Endothelial cell of umbilical vein (primary cell): ENCODE measurements at regions of chr1 and their contacts with region 1.

Region 1: DNA sequence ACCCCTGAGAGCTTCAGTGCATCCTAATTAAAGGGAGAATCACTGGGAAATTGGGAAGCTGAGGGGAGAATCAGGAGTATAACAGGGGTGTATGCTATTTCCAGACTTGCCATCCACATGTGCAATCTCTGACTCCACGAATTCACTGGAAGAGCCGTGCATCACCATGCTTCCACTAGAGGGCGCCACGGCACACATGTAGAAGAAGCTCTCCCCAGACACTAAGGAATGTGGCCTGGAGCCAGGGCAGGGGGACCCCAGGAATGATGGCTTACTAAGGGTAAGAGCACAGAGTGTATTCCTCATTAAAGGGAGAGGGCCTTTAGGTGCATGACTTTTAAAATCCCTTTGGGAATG is 81.5 kb downstream of the ABCA4 start:
- DNase-seq: peak; percentile 88
- H3K4me3 ChIP-seq: no peak overlapping the region
- H3K27ac ChIP-seq: peak overlapping the region; percentile 98
- H3K4me1 ChIP-seq: peaks cover 43% of the 10 kb centered on the region
- H3K27me3 ChIP-seq: no peaks in the 10 kb centered on the region
- CTCF ChIP-seq: peak; percentile 86 to 97
- POLR2A ChIP-seq: no peak

Region 2: GRCh38 chr1:94025383-94026340 is 13.8 kb before region 1 on chr1:
- CTCF ChIA-PET with region 1: interaction called, 297 read pairs
- POLR2A ChIA-PET with region 1: interaction called, 3 read pairs
- dilution Hi-C with region 1: no loop called
- intact Hi-C with region 1: loop called (anchors 1 kb)
- DNase-seq: peak; percentile 83
- H3K4me3 ChIP-seq: no peak overlapping the region
- H3K27ac ChIP-seq: no peak overlapping the region
- H3K4me1 ChIP-seq: peaks cover 25% of the 10 kb centered on the region
- H3K27me3 ChIP-seq: no peaks in the 10 kb centered on the region
- CTCF ChIP-seq: peak; percentile 53 to 73
- POLR2A ChIP-seq: no peak

Region 3: DNA sequence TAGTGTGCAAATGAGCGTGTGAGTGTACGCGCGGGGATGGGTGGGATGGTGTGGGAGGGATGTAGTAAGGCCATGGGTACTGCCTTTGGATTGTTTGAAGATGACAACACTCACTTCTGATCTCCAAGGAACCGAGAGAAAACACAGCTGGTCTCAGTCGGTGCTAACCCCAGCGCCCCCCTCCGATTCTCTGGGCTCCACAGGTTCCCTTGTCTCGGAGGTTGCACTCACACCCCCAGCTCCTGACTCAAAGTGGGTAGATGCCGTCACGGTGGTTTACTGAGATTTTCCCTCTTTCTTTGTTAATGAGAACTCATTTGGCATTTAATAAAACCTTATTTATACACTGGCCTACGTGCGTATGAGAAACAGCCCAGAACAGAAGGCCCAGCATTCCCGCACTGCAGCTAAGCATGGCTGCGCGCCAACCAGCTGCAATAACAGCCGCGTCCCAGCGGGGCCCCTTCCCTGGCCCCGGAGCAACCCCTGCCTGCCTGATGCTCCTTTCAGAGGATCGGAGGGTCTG is 55.7 kb after region 1 on chr1:
- CTCF ChIA-PET with region 1: interaction called, 8 read pairs
- POLR2A ChIA-PET with region 1: interaction called, 5 read pairs
- dilution Hi-C with region 1: no loop called
- intact Hi-C with region 1: loop called (anchors 1 kb)
- DNase-seq: peak; percentile 97
- H3K4me3 ChIP-seq: no peak overlapping the region
- H3K27ac ChIP-seq: peak overlapping the region; percentile 91
- H3K4me1 ChIP-seq: peaks cover 56% of the 10 kb centered on the region
- H3K27me3 ChIP-seq: no peaks in the 10 kb centered on the region
- CTCF ChIP-seq: no peak
- POLR2A ChIP-seq: peak; percentile 5

Region 4: GRCh38 chr1:94237291-94238226 is 198.1 kb after region 1 on chr1 and contains the start of gene ARHGAP29:
- CTCF ChIA-PET with region 1: interaction called, 29 read pairs
- POLR2A ChIA-PET with region 1: interaction called, 20 read pairs
- dilution Hi-C with region 1: no loop called
- intact Hi-C with region 1: no loop called
- DNase-seq: peak; percentile 86
- H3K4me3 ChIP-seq: peak within 1 kb of the TSS; percentile 88 to 100 (median 95)
- H3K27ac ChIP-seq: peak within 1 kb of the TSS; percentile 93
- H3K4me1 ChIP-seq: peaks cover 67% of the 10 kb centered on the region
- H3K27me3 ChIP-seq: no peaks in the 10 kb centered on the region
- CTCF ChIP-seq: no peak
- POLR2A ChIP-seq: peak; percentile 83
- total RNA-seq, gene ARHGAP29: 199 and 215 TPM in 2 replicates

Region 5: DNA sequence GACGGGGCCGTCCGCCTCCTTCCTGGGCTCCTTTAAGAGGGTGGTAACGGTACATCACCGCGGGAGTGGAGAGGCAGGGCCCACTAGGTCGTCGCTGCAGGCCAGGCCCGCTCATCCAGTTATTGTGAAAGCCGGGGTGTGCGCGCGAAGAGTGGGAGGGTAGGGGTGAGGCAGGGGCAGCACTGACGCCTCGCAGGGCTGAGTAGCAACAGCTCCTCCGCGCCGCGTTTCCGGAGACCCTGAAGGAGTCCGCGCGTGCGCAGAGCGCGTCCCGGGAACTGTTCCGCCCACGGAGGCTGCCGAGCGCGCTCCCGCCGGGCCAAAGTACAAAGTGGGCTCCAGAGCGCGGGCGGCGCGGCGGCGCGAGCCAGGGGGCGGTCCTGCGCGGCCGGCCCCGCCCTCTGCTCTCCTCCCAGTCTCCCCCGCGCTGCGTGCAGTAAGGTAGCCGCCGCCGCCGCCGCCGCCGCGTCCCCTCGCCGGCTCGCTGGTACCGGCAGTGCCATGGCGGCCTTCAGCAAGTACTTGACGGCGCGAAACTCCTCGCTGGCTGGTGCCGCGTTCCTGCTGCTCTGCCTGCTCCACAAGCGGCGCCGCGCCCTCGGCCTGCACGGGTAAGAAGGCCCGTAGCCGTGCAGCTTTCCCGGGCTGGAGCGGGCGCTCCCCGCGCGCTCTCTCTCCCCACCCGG is 378.6 kb after region 1 on chr1 and contains the start of gene ABCD3:
- CTCF ChIA-PET with region 1: interaction called, 3 read pairs
- POLR2A ChIA-PET with region 1: no interaction called
- dilution Hi-C with region 1: no loop called
- intact Hi-C with region 1: loop called (anchors 5 kb)
- DNase-seq: peak; percentile 98
- H3K4me3 ChIP-seq: peak within 1 kb of the TSS; percentile 80 to 94 (median 87)
- H3K27ac ChIP-seq: peak within 1 kb of the TSS; percentile 83
- H3K4me1 ChIP-seq: peaks cover 27% of the 10 kb centered on the region
- H3K27me3 ChIP-seq: peaks cover 4 to 5% of the 10 kb centered on the region in 2 experiments
- CTCF ChIP-seq: no peak
- POLR2A ChIP-seq: peak; percentile 66
- total RNA-seq, gene ABCD3: 31.6 and 32.6 TPM in 2 replicates